ENCODE measurements at regions of chr4 and their contacts with region 1.

Region 1: DNA sequence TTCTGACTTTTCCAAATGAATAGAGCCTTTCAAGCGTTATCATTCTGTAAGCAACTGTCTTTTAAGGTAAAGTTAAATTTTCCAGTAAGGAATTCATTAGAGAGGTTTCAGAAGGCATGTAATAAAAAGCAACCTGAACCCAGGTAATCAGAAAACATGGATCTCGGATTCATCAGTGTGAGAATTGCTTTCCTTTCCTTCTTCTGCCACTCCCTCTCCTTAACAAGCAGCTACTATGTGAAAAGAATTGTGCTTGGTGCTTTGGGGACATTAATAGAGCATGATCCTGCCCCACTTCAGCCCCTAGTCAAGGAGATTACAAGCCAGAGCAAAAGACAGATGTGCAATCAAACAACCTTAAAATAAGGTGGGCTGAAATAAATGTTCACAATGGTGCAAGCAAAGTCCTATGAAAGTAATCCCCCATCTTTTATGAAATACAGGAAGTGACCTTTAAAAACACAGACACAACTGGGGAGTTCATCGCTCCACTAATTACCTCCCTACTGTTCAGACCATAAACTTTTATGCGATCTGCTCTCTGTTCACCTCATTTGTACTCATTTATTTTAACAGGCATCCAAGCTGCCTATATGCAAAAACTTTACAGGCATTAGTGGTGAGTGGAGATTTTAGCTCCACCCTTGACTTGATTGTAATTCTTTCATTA is 122.9 kb upstream of the RASGEF1B start:
- DNase-seq: no peak
- ATAC-seq: peak; percentile 42
- H3K4me3 Mint-ChIP-seq: no peak overlapping the region
- H3K27ac Mint-ChIP-seq: no peak overlapping the region
- H3K4me1 Mint-ChIP-seq: peaks cover 43% of the 10 kb centered on the region
- H3K27me3 Mint-ChIP-seq: no peaks in the 10 kb centered on the region
- CTCF ChIP-seq: no peak

Region 2: DNA sequence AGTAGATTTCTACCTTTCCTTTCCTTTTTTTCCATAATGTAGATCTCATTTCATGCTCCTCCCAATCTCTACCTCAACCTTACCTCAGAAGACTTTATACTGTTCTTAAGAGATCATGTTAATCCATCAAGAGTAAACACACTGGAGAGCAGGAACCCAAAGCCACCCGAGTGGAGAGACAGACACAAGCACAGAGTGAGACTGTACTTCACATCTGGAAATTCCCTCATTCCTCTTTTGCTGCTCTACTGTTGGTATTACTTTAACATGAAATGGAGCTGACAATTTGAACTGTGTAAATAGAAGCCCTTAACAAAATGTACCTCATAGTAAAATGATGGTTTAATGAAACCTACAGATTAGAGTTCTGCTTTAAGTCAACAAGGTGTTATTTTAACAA is 17.2 kb before region 1 on chr4:
- CTCF ChIA-PET with region 1: no interaction called
- POLR2A ChIA-PET with region 1: no interaction called
- intact Hi-C with region 1: loop called (anchors 2 kb)
- DNase-seq: no peak
- ATAC-seq: peak; percentile 42
- H3K4me3 Mint-ChIP-seq: no peak overlapping the region
- H3K27ac Mint-ChIP-seq: no peak overlapping the region
- H3K4me1 Mint-ChIP-seq: peaks cover 29% of the 10 kb centered on the region
- H3K27me3 Mint-ChIP-seq: no peaks in the 10 kb centered on the region
- CTCF ChIP-seq: no peak

Region 3: GRCh38 chr4:81606801-81607501 is 12.3 kb after region 1 on chr4:
- CTCF ChIA-PET with region 1: no interaction called
- POLR2A ChIA-PET with region 1: interaction called, 3 read pairs
- intact Hi-C with region 1: loop called (anchors 1 kb)
- DNase-seq: no peak
- ATAC-seq: peak; percentile 54
- H3K4me3 Mint-ChIP-seq: peak overlapping the region; percentile 55
- H3K27ac Mint-ChIP-seq: peak overlapping the region; percentile 86
- H3K4me1 Mint-ChIP-seq: peaks cover 58% of the 10 kb centered on the region
- H3K27me3 Mint-ChIP-seq: no peaks in the 10 kb centered on the region
- CTCF ChIP-seq: no peak

Region 4: DNA sequence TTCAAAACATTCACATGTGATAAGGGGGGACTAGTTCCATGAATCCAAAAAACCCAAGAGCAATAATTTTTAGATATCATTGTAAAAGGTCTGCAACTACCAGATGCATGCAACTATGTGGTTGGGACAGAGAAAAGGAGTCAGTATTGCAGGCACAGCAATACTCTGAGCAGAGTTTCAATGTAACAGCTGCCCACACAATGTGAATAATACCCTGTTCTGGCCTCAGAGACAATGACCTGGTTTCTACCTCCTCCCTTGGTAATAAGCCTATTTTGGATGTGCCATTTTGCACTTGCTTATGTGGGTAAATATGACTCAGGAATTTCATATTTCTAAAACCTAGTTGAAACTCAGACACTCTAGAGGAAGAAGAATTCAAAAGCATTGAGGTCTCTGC is 71.9 kb after region 1 on chr4:
- CTCF ChIA-PET with region 1: no interaction called
- POLR2A ChIA-PET with region 1: no interaction called
- intact Hi-C with region 1: no loop called
- DNase-seq: no peak
- ATAC-seq: no peak
- H3K4me3 Mint-ChIP-seq: no peak overlapping the region
- H3K27ac Mint-ChIP-seq: no peak overlapping the region
- H3K4me1 Mint-ChIP-seq: no peaks in the 10 kb centered on the region
- H3K27me3 Mint-ChIP-seq: no peaks in the 10 kb centered on the region
- CTCF ChIP-seq: no peak

Region 5: DNA sequence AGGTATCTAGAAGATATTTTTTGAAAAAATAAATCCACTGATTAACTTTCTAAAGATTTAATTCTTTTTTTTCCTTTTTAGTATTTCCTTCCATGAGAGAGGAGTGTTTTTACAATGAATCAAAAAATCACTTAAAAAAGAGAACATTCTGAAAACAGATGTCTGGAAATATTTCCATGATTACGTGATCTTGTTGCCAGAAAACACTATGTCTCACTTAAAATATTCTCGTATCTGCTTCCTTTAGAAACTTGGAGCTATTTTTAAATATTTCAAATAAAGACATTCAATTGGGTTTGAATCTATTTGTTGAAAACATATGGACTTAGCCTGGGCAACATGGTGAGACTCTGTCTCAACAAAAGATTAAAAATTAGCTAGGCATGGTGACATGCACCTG is 109.8 kb after region 1 on chr4:
- CTCF ChIA-PET with region 1: no interaction called
- POLR2A ChIA-PET with region 1: no interaction called
- intact Hi-C with region 1: no loop called
- DNase-seq: no peak
- ATAC-seq: no peak
- H3K4me3 Mint-ChIP-seq: no peak overlapping the region
- H3K27ac Mint-ChIP-seq: no peak overlapping the region
- H3K4me1 Mint-ChIP-seq: peaks cover 2% of the 10 kb centered on the region
- H3K27me3 Mint-ChIP-seq: no peaks in the 10 kb centered on the region
- CTCF ChIP-seq: no peak

Region 6: GRCh38 chr4:82104578-82104977 is 510.0 kb after region 1 on chr4:
- CTCF ChIA-PET with region 1: no interaction called
- POLR2A ChIA-PET with region 1: no interaction called
- intact Hi-C with region 1: no loop called
- DNase-seq: no peak
- ATAC-seq: no peak
- H3K4me3 Mint-ChIP-seq: no peak overlapping the region
- H3K27ac Mint-ChIP-seq: no peak overlapping the region
- H3K4me1 Mint-ChIP-seq: no peaks in the 10 kb centered on the region
- H3K27me3 Mint-ChIP-seq: peaks cover 10% of the 10 kb centered on the region
- CTCF ChIP-seq: no peak